MCF 10A (cell line): ENCODE measurements at regions of chr2 and their contacts with region 1.

Region 1: GRCh38 chr2:169131587-169132512 is 62.5 kb downstream of the DHRS9 start:
- DNase-seq: peak; percentile 78
- H3K4me3 Mint-ChIP-seq: no peak overlapping the region
- H3K27ac Mint-ChIP-seq: no peak overlapping the region
- H3K4me1 Mint-ChIP-seq: no peaks in the 10 kb centered on the region
- H3K27me3 Mint-ChIP-seq: no peaks in the 10 kb centered on the region
- CTCF ChIP-seq: peak; percentile 73

Region 2: DNA sequence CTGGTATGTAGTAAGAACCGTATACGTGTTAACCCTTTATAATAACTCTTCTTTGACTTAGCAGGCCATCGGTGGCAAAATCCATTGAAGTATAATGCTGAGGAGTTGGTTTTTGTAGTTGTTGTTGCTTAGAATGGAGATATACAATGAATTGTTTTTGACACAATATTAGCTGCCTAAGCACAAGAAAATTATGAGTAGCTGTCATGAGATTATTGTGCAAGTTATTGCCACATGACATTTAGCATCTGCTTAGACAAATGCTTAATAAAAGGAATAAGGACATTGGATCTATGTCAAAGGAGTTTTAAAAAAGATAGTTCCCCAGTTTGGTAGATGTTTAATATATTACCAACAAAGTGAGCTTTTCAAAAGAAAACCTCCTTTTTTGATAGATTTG is 160.6 kb before region 1 on chr2:
- CTCF ChIA-PET with region 1: interaction called, 23 read pairs
- POLR2A ChIA-PET with region 1: no interaction called
- intact Hi-C with region 1: no loop called
- DNase-seq: no peak
- H3K4me3 Mint-ChIP-seq: no peak overlapping the region
- H3K27ac Mint-ChIP-seq: no peak overlapping the region
- H3K4me1 Mint-ChIP-seq: no peaks in the 10 kb centered on the region
- H3K27me3 Mint-ChIP-seq: no peaks in the 10 kb centered on the region
- CTCF ChIP-seq: no peak

Region 3: GRCh38 chr2:169095621-169096105 is 36.2 kb before region 1 on chr2:
- CTCF ChIA-PET with region 1: interaction called, 13 read pairs
- POLR2A ChIA-PET with region 1: no interaction called
- intact Hi-C with region 1: no loop called
- DNase-seq: peak; percentile 99
- H3K4me3 Mint-ChIP-seq: peak overlapping the region; percentile 52
- H3K27ac Mint-ChIP-seq: peak overlapping the region; percentile 3
- H3K4me1 Mint-ChIP-seq: peaks cover 45% of the 10 kb centered on the region
- H3K27me3 Mint-ChIP-seq: no peaks in the 10 kb centered on the region
- CTCF ChIP-seq: no peak